ENCODE measurements at regions of chr7 and their contacts with region 1.

Region 1: DNA sequence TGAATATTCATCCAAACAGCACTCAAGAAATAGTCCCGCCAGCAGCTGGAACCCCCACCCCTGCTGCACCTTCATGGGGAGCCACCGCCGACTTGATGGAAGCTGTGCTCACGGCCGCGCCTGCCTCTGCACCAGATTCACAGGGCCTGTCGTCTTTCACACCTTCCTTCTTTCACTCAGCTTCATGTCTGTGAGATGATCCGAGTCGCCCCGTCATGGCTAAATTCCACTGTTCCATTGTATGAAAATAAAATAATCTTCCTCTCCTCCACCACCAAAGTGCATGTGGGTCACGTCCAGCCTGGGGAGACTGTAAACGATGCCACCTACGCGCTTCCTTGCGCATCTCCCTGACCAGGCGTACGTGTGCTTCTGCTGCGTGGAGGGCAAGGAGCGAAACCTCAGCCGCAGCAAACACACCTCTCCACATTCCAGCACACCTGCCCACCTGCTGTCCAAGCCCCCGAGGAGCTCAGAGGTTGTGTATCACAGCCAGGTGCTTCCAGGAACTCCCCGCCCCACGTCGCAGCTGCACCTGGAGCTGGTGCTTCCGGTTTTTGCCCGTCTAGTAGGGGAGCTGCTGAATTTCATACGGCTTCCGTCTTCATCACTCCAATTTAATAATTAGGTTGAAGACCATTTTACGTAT is 137.0 kb downstream of the PTPRN2 start:
- DNase-seq: peak; percentile 56

Region 2: GRCh38 chr7:156466272-156466671 is 1984.3 kb before region 1 on chr7:
- intact Hi-C with region 1: loop called in 1 of 2 experiments (anchors 5 kb)
- DNase-seq: no peak

Region 3: GRCh38 chr7:158479021-158479663 is 28.5 kb after region 1 on chr7:
- intact Hi-C with region 1: no loop called
- DNase-seq: peak; percentile 53